Gastrocnemius medialis (tissue), 4 donors: ENCODE measurements at regions of chr1 and their contacts with region 1.

Region 1: GRCh38 chr1:59150577-59151391 is 146.1 kb upstream of the FGGY start:
- DNase-seq: peak; percentile 87 to 94
- ATAC-seq: peak; percentile 85 to 86
- H3K4me3 ChIP-seq: peak overlapping the region; percentile 6 to 48 (median 36)
- H3K27ac ChIP-seq: peak overlapping the region; percentile 86 to 94 (median 87)
- H3K4me1 ChIP-seq: peaks cover 28 to 35% of the 10 kb centered on the region in 2 donors
- H3K27me3 ChIP-seq: no peaks in the 10 kb centered on the region
- CTCF ChIP-seq: no peak
- POLR2A ChIP-seq: no peak

Region 2: GRCh38 chr1:58883037-58883887 is 267.5 kb before region 1 on chr1:
- in situ Hi-C with region 1: no loop called
- intact Hi-C with region 1: loop called (anchors 5 kb)
- DNase-seq: peak; percentile 74 to 88
- ATAC-seq: peak; percentile 68 to 79
- H3K4me3 ChIP-seq: no peak overlapping the region
- H3K27ac ChIP-seq: peak overlapping the region; percentile 80 to 89 (median 84)
- H3K4me1 ChIP-seq: peaks cover 62 to 67% of the 10 kb centered on the region in 2 donors
- H3K27me3 ChIP-seq: no peaks in the 10 kb centered on the region
- CTCF ChIP-seq: no peak
- POLR2A ChIP-seq: no peak

Region 3: GRCh38 chr1:59096501-59096900 is 54.3 kb before region 1 on chr1:
- in situ Hi-C with region 1: loop called in 1 of 4 experiments (anchors 10 kb)
- intact Hi-C with region 1: no loop called
- DNase-seq: no peak
- ATAC-seq: no peak
- H3K4me3 ChIP-seq: no peak overlapping the region
- H3K27ac ChIP-seq: no peak overlapping the region
- H3K4me1 ChIP-seq: peaks cover 3 to 4% of the 10 kb centered on the region in 2 donors
- H3K27me3 ChIP-seq: no peaks in the 10 kb centered on the region
- CTCF ChIP-seq: no peak
- POLR2A ChIP-seq: no peak

Region 4: GRCh38 chr1:59229138-59229537 is 78.4 kb after region 1 on chr1:
- in situ Hi-C with region 1: no loop called
- intact Hi-C with region 1: loop called (anchors 5 kb)
- DNase-seq: no peak
- ATAC-seq: peak; percentile 94 to 95
- H3K4me3 ChIP-seq: no peak overlapping the region
- H3K27ac ChIP-seq: peak overlapping the region; percentile 60 to 81 (median 78)
- H3K4me1 ChIP-seq: peaks cover 30 to 38% of the 10 kb centered on the region in 2 donors
- H3K27me3 ChIP-seq: no peaks in the 10 kb centered on the region
- CTCF ChIP-seq: no peak
- POLR2A ChIP-seq: no peak

Region 5: DNA sequence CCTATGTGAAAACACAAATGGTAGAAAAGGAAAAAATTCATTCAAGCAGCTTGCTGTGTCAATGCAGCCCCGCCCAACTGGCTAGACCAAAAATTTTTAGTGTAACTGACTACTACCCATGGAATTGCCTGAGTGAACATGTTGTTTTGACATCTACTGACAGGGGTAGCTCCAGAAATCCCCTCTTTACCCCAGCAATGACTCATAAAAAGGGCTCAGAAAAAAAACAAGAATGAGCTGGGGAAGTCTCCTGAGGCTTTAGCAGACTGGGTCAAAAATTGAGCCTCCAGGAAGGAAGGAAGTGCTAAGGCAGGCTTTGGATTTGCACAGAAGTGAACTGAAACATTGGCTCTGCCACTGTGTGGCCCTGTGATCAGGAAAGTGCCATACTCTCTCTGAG is 121.7 kb after region 1 on chr1:
- in situ Hi-C with region 1: no loop called
- intact Hi-C with region 1: no loop called
- DNase-seq: no peak
- ATAC-seq: peak; percentile 53 to 66
- H3K4me3 ChIP-seq: no peak overlapping the region
- H3K27ac ChIP-seq: peak overlapping the region in 1 of 4 donors; percentile 2
- H3K4me1 ChIP-seq: no peaks in the 10 kb centered on the region
- H3K27me3 ChIP-seq: no peaks in the 10 kb centered on the region
- CTCF ChIP-seq: no peak
- POLR2A ChIP-seq: no peak

Region 6: DNA sequence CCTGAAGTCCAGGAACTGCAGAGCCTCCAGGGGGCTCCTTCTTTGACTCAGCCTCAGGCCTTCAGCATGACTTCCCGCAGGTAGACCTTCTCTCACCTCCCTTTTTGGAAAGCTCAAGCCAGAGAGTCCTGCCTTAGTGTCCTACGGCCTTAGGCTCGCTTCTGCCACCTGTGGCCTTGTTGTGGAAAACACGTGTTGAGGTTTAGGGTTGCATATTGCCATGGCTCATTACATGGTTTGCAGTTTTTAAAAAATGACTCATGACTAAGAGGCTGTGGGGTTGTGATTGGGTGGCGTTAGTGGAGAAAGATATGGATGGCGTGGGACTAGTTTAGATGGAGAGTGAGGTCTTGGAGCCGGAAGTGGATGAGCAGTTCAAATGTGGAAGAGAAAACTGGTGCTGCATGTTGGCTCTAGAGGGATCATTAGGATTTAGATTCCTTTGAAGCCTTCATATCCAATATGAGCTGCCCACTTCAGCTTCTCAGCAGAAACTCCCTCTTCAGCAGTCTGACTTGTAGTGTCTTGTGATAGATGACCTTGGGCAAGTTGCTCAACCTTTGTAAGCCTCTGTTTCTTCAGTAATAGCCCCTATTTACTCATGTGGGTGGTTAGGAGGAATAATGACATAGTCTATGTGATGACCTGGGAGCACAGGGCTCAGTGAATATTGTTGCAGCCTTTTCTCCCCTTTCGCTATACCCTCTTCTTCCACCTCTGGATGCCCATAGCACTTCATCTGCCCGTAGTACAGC is 139.6 kb after region 1 on chr1:
- in situ Hi-C with region 1: loop called in 2 of 4 experiments (anchors 10 kb)
- intact Hi-C with region 1: loop called (anchors 2 kb)
- DNase-seq: peak; percentile 58 to 86
- ATAC-seq: peak; percentile 72 to 85
- H3K4me3 ChIP-seq: no peak overlapping the region
- H3K27ac ChIP-seq: peak overlapping the region; percentile 90 to 99 (median 96)
- H3K4me1 ChIP-seq: peaks cover 27 to 40% of the 10 kb centered on the region in 2 donors
- H3K27me3 ChIP-seq: no peaks in the 10 kb centered on the region
- CTCF ChIP-seq: peak; percentile 11 to 51 (median 35)
- POLR2A ChIP-seq: no peak

Region 7: DNA sequence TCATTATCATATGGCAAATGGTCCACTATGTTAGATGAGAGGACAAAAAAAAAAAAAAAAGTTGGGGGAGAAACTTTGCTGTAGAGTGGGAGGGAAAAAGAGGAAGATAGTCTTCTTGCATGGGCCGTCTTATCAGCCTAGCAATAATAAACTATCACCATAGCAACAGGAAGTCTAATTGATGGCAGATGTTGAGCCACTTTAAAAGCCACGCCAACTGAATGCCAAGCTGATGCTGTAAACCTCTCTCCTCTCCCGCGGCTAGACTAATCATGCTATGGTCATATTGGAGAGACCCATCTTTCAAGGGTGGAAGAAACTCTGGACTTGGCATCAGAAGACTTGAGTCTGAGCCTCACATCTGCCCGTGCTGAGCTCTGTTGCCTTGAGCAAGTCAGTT is 541.8 kb after region 1 on chr1:
- in situ Hi-C with region 1: loop called in 1 of 4 experiments (anchors 10 kb)
- intact Hi-C with region 1: loop called (anchors 5 kb)
- DNase-seq: no peak
- ATAC-seq: no peak
- H3K4me3 ChIP-seq: no peak overlapping the region
- H3K27ac ChIP-seq: peak overlapping the region; percentile 85 to 89 (median 87)
- H3K4me1 ChIP-seq: peaks cover 60 to 63% of the 10 kb centered on the region in 2 donors
- H3K27me3 ChIP-seq: no peaks in the 10 kb centered on the region
- CTCF ChIP-seq: no peak
- POLR2A ChIP-seq: no peak

Region 8: GRCh38 chr1:59699227-59699847 is 548.6 kb after region 1 on chr1:
- in situ Hi-C with region 1: loop called in 1 of 4 experiments (anchors 10 kb)
- intact Hi-C with region 1: loop called (anchors 5 kb)
- DNase-seq: no peak
- ATAC-seq: peak; percentile 40 to 56
- H3K4me3 ChIP-seq: peak overlapping the region in 1 of 4 donors; percentile 12
- H3K27ac ChIP-seq: peak overlapping the region; percentile 71 to 77 (median 74)
- H3K4me1 ChIP-seq: peaks cover 53 to 59% of the 10 kb centered on the region in 2 donors
- H3K27me3 ChIP-seq: no peaks in the 10 kb centered on the region
- CTCF ChIP-seq: peak; percentile 86 to 97 (median 93)
- POLR2A ChIP-seq: no peak